PC-9 (cell line): ENCODE measurements at regions of chr6 and their contacts with region 1.

Region 1: GRCh38 chr6:111483736-111484632 is 966 bp upstream of the REV3L start:
- DNase-seq: peak; percentile 75 to 88
- H3K4me3 ChIP-seq: peak overlapping the region; percentile 66
- H3K27ac ChIP-seq: peak overlapping the region; percentile 90
- H3K4me1 ChIP-seq: peaks cover 42% of the 10 kb centered on the region
- H3K27me3 ChIP-seq: no peaks in the 10 kb centered on the region
- CTCF ChIP-seq: no peak

Region 2: DNA sequence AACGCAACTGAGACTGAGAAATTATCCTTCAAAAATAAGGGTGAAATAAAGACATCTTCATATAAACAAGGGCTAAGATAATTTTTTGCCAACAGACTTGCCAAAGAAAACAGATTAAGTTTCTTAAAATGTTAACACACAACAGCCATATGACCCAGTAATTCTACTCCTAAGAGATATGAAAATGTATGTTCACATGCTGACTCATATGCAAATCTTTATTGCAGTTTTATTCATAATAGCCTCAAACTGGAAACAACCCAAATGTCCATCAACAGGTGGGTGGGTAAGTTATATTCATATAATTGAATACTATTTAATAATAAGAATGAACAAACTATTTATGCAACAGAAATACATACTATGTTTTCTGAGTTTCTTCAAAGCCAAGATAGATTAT is 141.1 kb before region 1 on chr6:
- CTCF ChIA-PET with region 1: no interaction called
- POLR2A ChIA-PET with region 1: interaction called, 21 read pairs
- intact Hi-C with region 1: no loop called
- DNase-seq: no peak
- H3K4me3 ChIP-seq: no peak overlapping the region
- H3K27ac ChIP-seq: no peak overlapping the region
- H3K4me1 ChIP-seq: no peaks in the 10 kb centered on the region
- H3K27me3 ChIP-seq: no peaks in the 10 kb centered on the region
- CTCF ChIP-seq: no peak

Region 3: GRCh38 chr6:111468329-111469012 is 15.5 kb before region 1 on chr6:
- CTCF ChIA-PET with region 1: no interaction called
- POLR2A ChIA-PET with region 1: no interaction called
- intact Hi-C with region 1: no loop called
- DNase-seq: no peak
- H3K4me3 ChIP-seq: no peak overlapping the region
- H3K27ac ChIP-seq: no peak overlapping the region
- H3K4me1 ChIP-seq: peaks cover 6% of the 10 kb centered on the region; the same call in 1 of the 2 replicates
- H3K27me3 ChIP-seq: no peaks in the 10 kb centered on the region
- CTCF ChIP-seq: no peak

Region 4: DNA sequence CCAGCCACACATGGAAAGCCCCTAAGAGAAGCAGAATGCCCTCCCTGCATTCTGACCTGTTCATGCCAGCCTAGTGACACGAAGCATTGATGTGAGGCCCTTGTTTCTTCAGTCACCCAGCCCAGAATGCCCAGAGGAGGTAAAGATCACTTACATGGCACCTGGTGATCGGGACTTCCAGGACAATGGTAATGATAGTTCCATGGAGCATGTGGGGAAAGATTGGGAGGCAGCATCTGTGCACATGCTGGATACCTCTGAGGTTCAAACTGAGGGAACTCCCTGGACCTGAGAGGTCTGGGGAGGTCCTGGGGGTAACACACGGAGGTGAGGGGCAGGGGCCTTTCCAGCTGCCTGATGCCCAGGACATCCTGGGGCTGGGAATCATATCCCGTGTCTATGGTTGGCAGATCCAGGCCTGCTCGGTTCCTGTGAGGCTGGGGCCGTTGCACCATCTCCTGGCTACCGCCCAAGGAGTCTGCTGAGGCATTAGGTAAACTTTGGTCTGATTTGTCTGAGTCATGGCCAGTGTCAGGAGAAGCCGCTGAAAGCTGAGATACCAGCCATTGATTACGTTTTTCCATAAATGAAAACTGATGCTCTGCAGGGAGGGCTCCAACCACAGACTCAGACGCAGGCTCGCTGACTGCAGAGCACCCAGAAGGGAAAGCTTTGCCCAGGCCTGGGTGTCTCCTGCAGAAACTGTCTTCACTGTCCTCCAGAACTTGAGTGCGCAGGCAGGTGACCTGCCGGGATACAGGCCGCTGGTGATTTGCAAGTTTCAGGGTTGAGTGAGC is 107.3 kb after region 1 on chr6:
- CTCF ChIA-PET with region 1: interaction called, 3 read pairs
- POLR2A ChIA-PET with region 1: interaction called, 3 read pairs
- intact Hi-C with region 1: loop called (anchors 5 kb)
- DNase-seq: peak; percentile 90 to 97
- H3K4me3 ChIP-seq: peak overlapping the region; percentile 21; the same call in 1 of the 2 replicates
- H3K27ac ChIP-seq: peak overlapping the region; percentile 96
- H3K4me1 ChIP-seq: peaks cover 69% of the 10 kb centered on the region
- H3K27me3 ChIP-seq: no peaks in the 10 kb centered on the region
- CTCF ChIP-seq: no peak

Region 5: DNA sequence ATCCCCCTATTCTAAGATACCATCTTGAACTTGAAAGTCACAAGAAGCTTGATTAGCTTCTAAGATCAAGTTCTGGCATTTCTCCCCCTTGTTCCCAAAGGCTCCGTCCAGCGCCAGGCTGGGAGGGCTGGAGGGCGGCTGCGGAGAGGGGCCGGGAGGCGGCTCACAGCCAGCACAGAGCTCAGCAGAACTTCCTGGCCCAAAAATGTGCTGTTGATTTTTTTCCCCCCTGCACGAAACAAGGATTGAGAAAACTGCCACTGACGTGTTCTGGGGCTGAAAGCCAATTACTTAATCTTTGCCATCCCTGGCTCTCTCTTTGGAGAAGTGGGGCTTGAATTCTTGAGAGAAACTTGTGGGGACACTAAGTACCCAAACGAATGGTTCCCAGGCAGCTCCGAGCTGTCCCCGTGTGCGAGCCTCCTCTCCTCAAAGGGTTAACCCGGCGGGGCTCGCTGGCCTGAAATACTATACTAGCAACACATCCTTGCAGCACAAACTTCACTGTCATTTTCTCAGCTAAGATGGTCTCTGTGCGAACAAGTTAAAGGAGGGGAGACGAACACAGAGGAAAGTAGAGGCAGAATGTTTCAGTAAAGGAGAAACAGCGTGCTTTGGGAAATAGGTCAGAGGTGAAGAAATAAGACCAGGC is 121.2 kb after region 1 on chr6:
- CTCF ChIA-PET with region 1: no interaction called
- POLR2A ChIA-PET with region 1: interaction called, 23 read pairs
- intact Hi-C with region 1: loop called (anchors 2 kb)
- DNase-seq: peak in 1 of 2 experiments; percentile 34
- H3K4me3 ChIP-seq: peak overlapping the region; percentile 79
- H3K27ac ChIP-seq: peak overlapping the region; percentile 95
- H3K4me1 ChIP-seq: peaks cover 37% of the 10 kb centered on the region
- H3K27me3 ChIP-seq: no peaks in the 10 kb centered on the region
- CTCF ChIP-seq: no peak

Region 6: DNA sequence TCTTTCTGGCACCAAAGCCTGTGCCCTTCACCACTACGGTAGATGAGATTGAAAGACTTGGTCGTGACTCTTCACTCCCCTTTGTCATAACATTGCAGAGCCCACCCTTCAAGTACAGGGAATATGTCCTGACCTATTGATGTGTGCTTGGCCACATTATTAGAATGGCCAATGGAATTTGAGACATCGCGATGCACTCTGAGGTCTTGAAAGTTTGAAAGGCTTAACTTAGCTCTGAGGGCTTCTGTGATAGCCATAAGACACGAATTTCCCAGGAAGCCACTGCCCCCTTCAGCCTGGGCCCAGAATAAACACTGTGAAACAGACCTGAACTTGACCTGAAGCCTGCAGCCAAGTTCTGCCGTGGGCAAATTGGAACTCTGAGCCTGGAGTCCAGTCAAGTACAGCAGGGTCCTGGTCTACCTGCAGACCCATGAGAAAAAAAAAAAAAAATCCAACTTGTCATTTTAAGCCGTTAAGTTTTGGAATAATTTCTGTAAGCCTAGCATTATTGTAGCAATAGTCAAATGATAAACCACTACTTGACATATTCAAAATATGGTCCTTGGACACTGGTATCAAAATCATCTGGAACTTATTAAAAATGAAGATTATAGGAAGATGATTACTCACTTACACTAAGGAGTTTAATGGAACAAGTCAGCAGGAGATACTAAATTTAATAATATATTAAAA is 158.6 kb after region 1 on chr6:
- CTCF ChIA-PET with region 1: no interaction called
- POLR2A ChIA-PET with region 1: interaction called, 18 read pairs
- intact Hi-C with region 1: no loop called
- DNase-seq: peak; percentile 46 to 50
- H3K4me3 ChIP-seq: no peak overlapping the region
- H3K27ac ChIP-seq: no peak overlapping the region
- H3K4me1 ChIP-seq: no peaks in the 10 kb centered on the region
- H3K27me3 ChIP-seq: no peaks in the 10 kb centered on the region
- CTCF ChIP-seq: peak; percentile 71